K562 (cell line): ENCODE measurements at regions of chr6 and their contacts with region 1.

Region 1: GRCh38 chr6:20212392-20213217 is at the start of gene MBOAT1:
- DNase-seq: peak; percentile 89 to 93 (median 91)
- ATAC-seq: peak; percentile 94
- H3K4me3 ChIP-seq: peak within 1 kb of the TSS; percentile 59
- H3K27ac ChIP-seq: peak within 1 kb of the TSS; percentile 86
- H3K4me1 ChIP-seq: peaks cover 35 to 43% of the 10 kb centered on the region in 2 experiments
- H3K27me3 ChIP-seq: no peaks in the 10 kb centered on the region
- CTCF ChIP-seq: peak in 2 of 3 experiments; percentile 26 to 42; a peak in 4 of 6 replicates
- EP300 ChIP-seq: no peak
- POLR2A ChIP-seq: peak; percentile 71
- RAD21 ChIP-seq: peak; percentile 38 to 49; a peak in 3 of 4 replicates
- polyA plus RNA-seq, gene MBOAT1: 0.13 to 0.39 TPM

Region 2: DNA sequence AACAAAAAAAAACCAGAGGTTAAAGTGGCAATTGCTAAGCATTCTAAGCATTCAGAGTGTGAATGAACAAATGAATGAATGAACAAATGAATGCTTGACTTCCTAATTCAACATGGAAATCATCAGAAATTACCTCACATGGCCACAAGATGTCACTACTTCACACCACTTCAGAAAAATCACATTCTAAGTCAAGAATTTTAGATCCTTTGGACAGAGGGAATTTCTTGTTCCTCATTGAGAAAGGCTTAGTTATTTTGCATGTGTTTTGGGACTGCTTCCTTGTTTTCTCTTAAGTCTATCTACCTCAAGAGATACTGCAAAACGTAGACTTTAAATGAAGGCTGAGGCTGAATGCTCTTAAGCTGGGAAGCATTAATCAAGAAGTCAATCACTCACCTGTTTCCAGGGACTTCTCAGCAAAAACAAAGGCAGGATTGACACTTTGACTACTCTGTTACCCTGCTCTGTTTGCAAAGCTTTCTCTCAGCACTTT is 120.5 kb before region 1 on chr6:
- CTCF ChIA-PET with region 1: no interaction called
- POLR2A ChIA-PET with region 1: no interaction called
- in situ Hi-C with region 1: no loop called
- intact Hi-C with region 1: loop called (anchors 5 kb)
- DNase-seq: peak; percentile 39 to 69 (median 44)
- ATAC-seq: peak; percentile 66
- H3K4me3 ChIP-seq: no peak overlapping the region
- H3K27ac ChIP-seq: no peak overlapping the region
- H3K4me1 ChIP-seq: no peaks in the 10 kb centered on the region
- H3K27me3 ChIP-seq: no peaks in the 10 kb centered on the region
- CTCF ChIP-seq: peak; percentile 59 to 85 (median 69); a peak in 5 of 6 replicates
- EP300 ChIP-seq: no peak
- POLR2A ChIP-seq: no peak
- RAD21 ChIP-seq: peak; percentile 83 to 95

Region 3: GRCh38 chr6:20126789-20127653 is 85.6 kb before region 1 on chr6:
- CTCF ChIA-PET with region 1: no interaction called
- POLR2A ChIA-PET with region 1: no interaction called
- in situ Hi-C with region 1: no loop called
- intact Hi-C with region 1: loop called (anchors 2 kb)
- DNase-seq: peak; percentile 83 to 87 (median 86)
- ATAC-seq: peak; percentile 99
- H3K4me3 ChIP-seq: no peak overlapping the region
- H3K27ac ChIP-seq: no peak overlapping the region
- H3K4me1 ChIP-seq: peaks cover 0 to 7% of the 10 kb centered on the region in 2 experiments; a peak in 2 of 5 replicates
- H3K27me3 ChIP-seq: no peaks in the 10 kb centered on the region
- CTCF ChIP-seq: peak; percentile 93 to 99 (median 95)
- EP300 ChIP-seq: no peak
- POLR2A ChIP-seq: no peak
- RAD21 ChIP-seq: peak; percentile 58 to 79

Region 4: DNA sequence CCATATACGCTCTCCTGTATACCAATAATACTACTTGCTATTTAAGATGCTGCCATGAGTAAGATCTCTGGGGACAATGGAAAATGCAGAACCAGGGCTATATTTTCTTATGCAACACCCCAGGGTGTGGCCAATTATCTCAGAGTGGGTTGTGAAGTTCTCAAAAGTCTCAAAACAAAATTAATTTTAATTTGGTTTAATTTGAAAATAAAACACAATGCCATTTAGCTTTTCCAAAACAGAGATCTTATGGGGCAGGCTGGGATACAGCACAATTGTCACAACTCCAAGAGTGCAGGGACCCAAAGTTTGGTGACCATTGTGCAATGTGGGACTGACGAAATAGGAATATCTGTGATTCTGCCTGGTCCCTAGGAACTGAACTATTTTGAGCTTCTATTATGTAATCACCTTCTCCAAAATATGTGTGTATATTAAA is 43.5 kb before region 1 on chr6:
- CTCF ChIA-PET with region 1: no interaction called
- POLR2A ChIA-PET with region 1: no interaction called
- in situ Hi-C with region 1: no loop called
- intact Hi-C with region 1: no loop called
- DNase-seq: no peak
- ATAC-seq: peak; percentile 60
- H3K4me3 ChIP-seq: no peak overlapping the region
- H3K27ac ChIP-seq: no peak overlapping the region
- H3K4me1 ChIP-seq: peaks cover 0 to 17% of the 10 kb centered on the region in 2 experiments; a peak in 4 of 5 replicates
- H3K27me3 ChIP-seq: no peaks in the 10 kb centered on the region
- CTCF ChIP-seq: no peak
- EP300 ChIP-seq: no peak
- POLR2A ChIP-seq: no peak
- RAD21 ChIP-seq: no peak

Region 5: DNA sequence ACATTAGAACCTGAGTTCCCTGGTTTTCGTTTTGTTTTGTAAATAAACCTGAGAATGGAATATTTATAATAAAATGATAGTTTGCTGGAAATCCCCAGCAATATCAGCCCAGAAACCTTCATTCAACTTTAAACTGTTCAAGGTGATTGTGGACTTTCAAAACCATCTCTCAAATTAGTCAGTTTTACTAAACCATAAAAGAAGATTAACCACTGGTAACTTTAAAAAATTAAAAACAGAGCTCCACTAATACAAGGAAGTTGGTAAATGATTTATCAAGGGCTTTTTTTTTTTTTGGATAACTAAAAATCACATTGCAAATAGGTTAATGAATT is 10.3 kb before region 1 on chr6:
- CTCF ChIA-PET with region 1: no interaction called
- POLR2A ChIA-PET with region 1: interaction called, 18 read pairs
- in situ Hi-C with region 1: no loop called
- intact Hi-C with region 1: no loop called
- DNase-seq: no peak
- ATAC-seq: no peak
- H3K4me3 ChIP-seq: no peak overlapping the region
- H3K27ac ChIP-seq: peak overlapping the region; percentile 69; the same call in 2 of the 3 replicates
- H3K4me1 ChIP-seq: peaks cover 19 to 54% of the 10 kb centered on the region in 2 experiments
- H3K27me3 ChIP-seq: no peaks in the 10 kb centered on the region
- CTCF ChIP-seq: no peak
- EP300 ChIP-seq: no peak
- POLR2A ChIP-seq: no peak
- RAD21 ChIP-seq: no peak

Region 6: DNA sequence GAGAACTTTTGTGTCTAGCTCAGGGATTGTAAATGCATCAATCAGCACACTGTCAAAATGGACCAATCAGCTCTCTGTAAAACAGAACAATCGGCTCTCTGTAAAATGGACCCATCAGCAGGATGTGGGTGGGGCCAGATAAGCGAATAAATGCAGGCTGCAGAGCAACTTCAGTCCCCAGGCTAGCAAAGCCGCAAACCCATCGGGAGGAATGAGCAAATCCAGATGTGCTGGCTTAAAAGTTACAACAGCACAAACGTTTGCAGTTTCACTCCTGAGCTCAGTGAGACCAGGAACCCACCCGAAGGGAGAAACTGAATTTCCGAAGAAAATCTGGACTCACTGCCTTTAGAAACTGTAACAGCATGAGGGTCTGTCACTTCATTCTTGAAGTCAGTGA is 21.5 kb after region 1 on chr6:
- CTCF ChIA-PET with region 1: no interaction called
- POLR2A ChIA-PET with region 1: interaction called, 11 read pairs
- in situ Hi-C with region 1: no loop called
- intact Hi-C with region 1: no loop called
- DNase-seq: no peak
- ATAC-seq: no peak
- H3K4me3 ChIP-seq: no peak overlapping the region
- H3K27ac ChIP-seq: no peak overlapping the region
- H3K4me1 ChIP-seq: peaks cover 0 to 9% of the 10 kb centered on the region in 2 experiments; a peak in 3 of 5 replicates
- H3K27me3 ChIP-seq: no peaks in the 10 kb centered on the region
- CTCF ChIP-seq: no peak
- EP300 ChIP-seq: no peak
- POLR2A ChIP-seq: no peak
- RAD21 ChIP-seq: no peak

Region 7: GRCh38 chr6:20274137-20274536 is 61.5 kb after region 1 on chr6:
- CTCF ChIA-PET with region 1: no interaction called
- POLR2A ChIA-PET with region 1: no interaction called
- in situ Hi-C with region 1: no loop called
- intact Hi-C with region 1: loop called (anchors 5 kb)
- DNase-seq: no peak
- ATAC-seq: no peak
- H3K4me3 ChIP-seq: no peak overlapping the region
- H3K27ac ChIP-seq: no peak overlapping the region
- H3K4me1 ChIP-seq: peaks cover 0 to 15% of the 10 kb centered on the region in 2 experiments; a peak in 4 of 5 replicates
- H3K27me3 ChIP-seq: no peaks in the 10 kb centered on the region
- CTCF ChIP-seq: no peak
- EP300 ChIP-seq: no peak
- POLR2A ChIP-seq: no peak
- RAD21 ChIP-seq: no peak

Region 8: DNA sequence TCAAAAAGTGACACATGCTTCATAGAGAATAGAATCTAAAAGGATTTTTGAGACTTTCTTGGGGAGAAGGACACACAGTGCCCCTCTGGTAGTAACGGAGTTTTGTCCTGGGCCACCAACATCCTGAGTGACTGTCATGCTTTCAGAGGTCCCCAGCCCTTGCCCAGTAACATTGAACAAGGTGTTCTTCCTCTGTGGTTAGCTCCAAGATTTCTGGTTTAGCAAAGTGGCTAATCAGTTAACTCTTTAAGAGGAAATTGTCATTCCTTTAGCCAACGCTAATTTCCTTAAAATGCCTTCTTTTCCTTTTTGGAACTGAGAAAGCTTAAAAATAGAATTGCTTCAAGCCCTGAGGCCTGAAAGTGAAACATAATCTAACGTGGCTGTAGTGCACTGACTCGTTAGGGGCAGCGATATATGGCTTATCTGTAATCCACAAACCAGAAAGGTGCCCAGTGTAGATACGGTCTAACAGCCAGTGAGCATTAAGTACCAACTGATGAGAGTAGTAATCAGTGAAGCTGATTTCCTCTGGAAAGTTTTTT is 196.9 kb after region 1 on chr6:
- CTCF ChIA-PET with region 1: no interaction called
- POLR2A ChIA-PET with region 1: interaction called, 3 read pairs
- in situ Hi-C with region 1: no loop called
- intact Hi-C with region 1: loop called (anchors 2 kb)
- DNase-seq: peak in 2 of 4 experiments; percentile 64 to 87
- ATAC-seq: peak; percentile 66
- H3K4me3 ChIP-seq: peak overlapping the region; percentile 1; the same call in 1 of the 2 replicates
- H3K27ac ChIP-seq: peak overlapping the region; percentile 69
- H3K4me1 ChIP-seq: peaks cover 31 to 86% of the 10 kb centered on the region in 2 experiments
- H3K27me3 ChIP-seq: no peaks in the 10 kb centered on the region
- CTCF ChIP-seq: peak in 1 of 3 experiments; percentile 4; a peak in 1 of 6 replicates
- EP300 ChIP-seq: peak; percentile 96
- POLR2A ChIP-seq: no peak
- RAD21 ChIP-seq: no peak